Posterior cingulate gyrus (tissue), 11 donors: ENCODE measurements at regions of chr4 and their contacts with region 1.

Region 1: DNA sequence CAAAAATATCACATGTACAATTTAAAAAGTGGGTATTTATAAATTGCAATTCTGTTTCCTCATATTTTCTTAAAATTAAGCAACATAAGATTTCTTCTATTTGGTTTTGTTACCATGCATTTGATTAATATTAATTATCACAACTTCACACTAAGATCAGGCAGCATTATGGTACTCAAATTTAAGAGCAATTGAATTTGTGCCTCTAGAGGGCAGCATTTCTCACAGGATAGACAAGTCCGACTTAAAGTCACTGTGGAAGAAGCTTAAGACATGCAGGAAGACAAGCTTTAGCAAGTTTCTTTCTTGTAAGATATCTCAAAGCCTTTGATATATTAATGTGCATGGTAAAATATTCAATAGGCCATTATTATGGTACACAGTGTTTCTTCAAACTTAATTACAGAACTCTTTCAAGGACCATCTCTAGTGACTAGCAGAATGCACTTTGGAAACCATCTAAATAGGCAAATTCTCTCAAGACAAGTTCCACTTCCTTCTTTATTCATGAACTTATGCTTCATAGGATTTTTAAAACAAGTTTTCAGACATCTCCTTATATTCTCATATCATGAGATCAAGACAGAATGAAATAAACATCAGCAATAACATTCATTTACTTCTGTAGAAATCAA is 35.0 kb downstream of the FBXW7 start:
- DNase-seq: peak in 2 of 10 donors; percentile 9 to 31

Region 2: GRCh38 chr4:152454398-152455011 is 46.4 kb before region 1 on chr4:
- intact Hi-C with region 1: no loop called
- DNase-seq: no peak

Region 3: GRCh38 chr4:152735396-152735859 is 234.5 kb after region 1 on chr4:
- intact Hi-C with region 1: loop called (anchors 2 kb)
- DNase-seq: no peak